ENCODE measurements at regions of chr19 and their contacts with region 1.

Region 1: DNA sequence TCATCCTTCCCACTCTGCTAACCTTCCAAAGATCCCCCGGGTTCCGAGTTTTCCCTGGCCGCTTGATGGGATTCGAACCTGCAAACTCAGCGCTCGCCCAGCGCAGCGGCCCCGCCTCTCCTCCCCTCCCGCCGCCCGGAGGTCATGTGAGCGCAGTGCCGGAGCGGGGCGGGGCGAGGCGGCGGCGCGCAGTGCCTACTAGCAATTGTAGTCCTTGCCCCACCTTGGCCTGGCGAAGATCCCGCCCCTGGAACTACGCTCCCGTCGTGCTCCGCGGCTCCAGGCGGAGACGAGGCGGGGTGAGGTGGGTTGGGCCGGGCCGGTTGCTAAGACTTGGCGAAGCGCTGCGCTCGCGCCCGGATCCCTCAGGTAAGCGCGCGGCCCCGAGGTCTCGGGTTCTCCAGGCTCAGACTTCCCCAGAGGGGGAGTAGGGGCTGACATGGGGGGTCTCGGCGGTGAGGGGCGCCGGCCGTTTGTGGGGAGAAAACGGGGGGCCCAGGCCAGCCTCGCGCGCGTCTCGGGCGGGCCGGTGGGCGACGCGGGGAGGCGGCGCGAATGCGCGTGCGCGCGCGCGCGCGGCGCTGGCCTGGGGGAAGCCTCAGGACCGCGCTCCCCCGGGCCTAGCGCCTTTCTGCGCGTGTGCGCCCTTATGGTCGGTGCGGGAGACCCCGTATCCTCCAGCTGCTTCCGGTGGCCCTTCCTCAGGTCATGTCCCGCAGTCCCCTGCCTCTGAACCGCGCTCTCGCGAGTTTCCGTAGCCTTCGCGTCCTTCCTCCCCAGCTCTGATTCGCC is at the starts of genes ADAT3 and SCAMP4:
- DNase-seq: peak; percentile 99
- ATAC-seq: peak; percentile 99
- H3K4me3 ChIP-seq: peak within 1 kb of the TSS; percentile 62
- H3K27ac ChIP-seq: peak within 1 kb of the TSS; percentile 76
- H3K4me1 ChIP-seq: peaks cover 10% of the 10 kb centered on the region
- H3K27me3 ChIP-seq: no peaks in the 10 kb centered on the region
- CTCF ChIP-seq: no peak
- POLR2A ChIP-seq: peak; percentile 79
- RAD21 ChIP-seq: no peak
- total RNA-seq, gene ADAT3: 0.28 and 0.36 TPM in 2 replicates
- total RNA-seq, gene SCAMP4: 10.8 and 16.1 TPM in 2 replicates

Region 2: DNA sequence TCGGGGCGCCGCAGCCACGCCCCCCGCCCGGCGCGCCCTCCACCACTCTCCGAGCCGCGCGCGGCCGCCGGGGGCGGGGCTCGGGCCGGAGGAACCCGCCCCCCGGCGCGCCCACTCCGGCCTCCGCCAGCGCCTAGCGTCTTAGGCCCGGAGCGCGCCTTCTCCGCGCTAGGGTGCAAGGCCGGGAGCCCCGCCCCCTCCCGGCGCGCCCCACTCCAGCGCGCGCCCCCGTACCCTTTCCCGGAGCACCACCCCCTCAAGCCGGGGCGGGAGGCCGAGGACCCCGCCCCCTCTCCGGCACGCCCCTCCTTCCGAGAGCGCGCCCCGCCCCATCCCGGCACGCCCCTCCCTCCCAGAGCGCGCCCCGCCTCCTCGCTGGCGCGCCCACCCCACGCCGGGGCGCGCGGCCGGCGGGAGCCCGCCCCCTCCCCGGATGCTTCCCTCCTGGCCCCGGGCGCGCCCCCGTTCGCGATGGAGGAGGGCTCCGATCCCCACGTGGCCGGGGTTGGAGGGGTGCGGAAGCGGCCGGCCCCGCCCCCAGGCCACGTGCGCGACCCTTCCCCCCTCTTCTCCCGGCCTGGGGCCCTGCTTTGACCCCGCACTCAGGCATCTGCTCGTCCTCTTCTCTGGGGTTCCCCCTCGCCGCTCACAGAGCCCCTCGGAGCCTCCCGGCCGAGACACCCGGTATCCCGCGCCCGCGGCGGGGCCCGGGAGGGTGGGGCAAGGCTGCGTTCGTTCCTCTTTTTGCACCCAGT is 41.4 kb before region 1 on chr19:
- CTCF ChIA-PET with region 1: no interaction called
- POLR2A ChIA-PET with region 1: interaction called, 3 read pairs
- dilution Hi-C with region 1: no loop called
- in situ Hi-C with region 1: no loop called
- intact Hi-C with region 1: loop called (anchors 1 kb)
- DNase-seq: peak; percentile 92
- ATAC-seq: peak; percentile 79
- H3K4me3 ChIP-seq: peak overlapping the region; percentile 98
- H3K27ac ChIP-seq: peak overlapping the region; percentile 85
- H3K4me1 ChIP-seq: peaks cover 23% of the 10 kb centered on the region
- H3K27me3 ChIP-seq: no peaks in the 10 kb centered on the region
- CTCF ChIP-seq: no peak
- POLR2A ChIP-seq: peak; percentile 40; the same call in 1 of the 2 replicates
- RAD21 ChIP-seq: no peak

Region 3: GRCh38 chr19:1884719-1885334 is 20.4 kb before region 1 on chr19:
- CTCF ChIA-PET with region 1: no interaction called
- POLR2A ChIA-PET with region 1: no interaction called
- dilution Hi-C with region 1: no loop called
- in situ Hi-C with region 1: no loop called
- intact Hi-C with region 1: loop called (anchors 1 kb)
- DNase-seq: no peak
- ATAC-seq: peak; percentile 49
- H3K4me3 ChIP-seq: peak overlapping the region; percentile 99
- H3K27ac ChIP-seq: peak overlapping the region; percentile 89
- H3K4me1 ChIP-seq: peaks cover 24% of the 10 kb centered on the region
- H3K27me3 ChIP-seq: no peaks in the 10 kb centered on the region
- CTCF ChIP-seq: no peak
- POLR2A ChIP-seq: peak; percentile 43; the same call in 1 of the 2 replicates
- RAD21 ChIP-seq: no peak

Measured in IMR-90 (cell line).